ENCODE measurements at regions of chr15 and their contacts with region 1.

Region 1: DNA sequence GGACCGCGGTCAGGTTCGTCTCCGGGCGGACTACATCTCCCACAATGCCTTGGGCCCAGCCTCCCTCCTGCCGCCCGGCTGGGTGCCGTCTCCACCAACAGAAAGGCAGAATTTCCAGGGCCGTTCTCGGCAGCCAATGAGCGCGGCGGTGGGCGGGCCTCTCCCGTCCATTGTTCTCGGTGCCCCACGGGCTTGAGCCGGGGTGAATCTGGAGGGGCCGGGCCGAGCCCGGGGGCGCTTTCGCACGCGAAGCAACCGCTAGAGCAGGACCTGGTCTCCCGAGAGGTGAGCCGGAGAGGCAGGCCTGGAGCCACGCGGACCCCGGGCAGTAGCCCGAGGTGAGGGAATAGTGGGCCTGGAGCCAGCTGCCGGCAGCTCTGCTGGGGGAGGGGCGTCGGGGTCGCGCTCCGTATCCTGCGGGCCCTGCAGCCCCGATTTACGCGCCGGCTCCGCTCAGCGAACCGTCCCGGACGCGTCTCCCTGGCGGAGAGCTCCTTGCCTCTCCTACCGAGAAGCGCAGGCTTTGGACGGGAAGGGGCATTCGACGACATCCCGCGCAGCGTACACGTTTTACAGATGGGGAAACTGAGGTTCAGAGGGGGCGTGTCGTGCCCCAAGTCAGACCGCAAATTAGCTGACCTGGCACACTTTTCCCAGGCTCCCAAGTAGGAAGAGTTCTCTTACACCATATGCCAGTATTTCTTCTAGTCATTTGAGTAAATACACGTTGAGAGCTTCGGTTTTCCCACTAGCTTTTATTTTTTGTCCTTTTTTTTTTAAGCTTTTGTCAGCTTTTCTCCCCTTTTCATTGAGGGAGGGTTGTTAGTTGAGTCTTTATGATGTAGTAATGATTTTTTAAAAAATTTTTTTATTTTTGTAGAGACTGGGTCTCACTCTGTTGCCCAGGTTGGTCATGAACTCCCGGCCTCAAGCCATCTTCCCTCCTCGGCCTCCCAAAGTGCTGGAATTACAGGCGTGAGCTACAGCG is at the start of gene ZSCAN2:
- DNase-seq: peak; percentile 96
- CTCF ChIP-seq: no peak

Region 2: DNA sequence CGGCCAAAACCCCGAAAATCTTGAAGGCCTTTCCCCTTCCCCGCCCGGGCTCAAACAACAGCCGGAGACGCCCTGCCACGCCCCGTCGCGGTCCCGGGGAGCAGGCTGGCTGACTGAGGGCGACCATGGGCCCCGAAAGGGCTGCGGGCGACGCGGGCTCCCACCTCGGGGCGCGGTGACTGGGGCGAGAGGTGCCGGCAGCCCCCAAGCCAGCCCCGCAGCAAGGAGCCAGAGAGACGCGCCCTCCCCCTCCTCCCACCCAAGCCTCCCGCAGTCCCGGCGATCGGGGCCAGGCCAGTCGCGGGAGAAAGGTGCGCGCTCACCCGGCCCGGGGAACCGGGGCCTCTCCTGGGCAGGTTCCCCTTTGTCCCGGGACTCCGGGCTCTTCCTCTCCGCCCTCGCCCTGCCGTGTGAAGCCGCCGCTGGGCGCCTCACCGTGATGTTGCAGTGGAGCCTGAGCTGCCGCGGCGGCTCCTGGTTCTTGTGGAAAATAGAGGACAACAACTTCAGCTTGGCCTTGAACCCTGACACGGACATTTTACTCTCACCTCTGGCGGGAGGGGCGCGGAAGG is 30.9 kb before region 1 on chr15:
- CTCF ChIA-PET with region 1: interaction called, 12 read pairs
- POLR2A ChIA-PET with region 1: no interaction called
- DNase-seq: peak; percentile 46
- CTCF ChIP-seq: no peak

Region 3: GRCh38 chr15:84653910-84654704 is 53.0 kb after region 1 on chr15 and contains the start of gene WDR73:
- CTCF ChIA-PET with region 1: interaction called, 14 read pairs
- POLR2A ChIA-PET with region 1: no interaction called
- DNase-seq: peak; percentile 96
- CTCF ChIP-seq: no peak

Region 4: GRCh38 chr15:84741121-84741520 is 140.0 kb after region 1 on chr15:
- CTCF ChIA-PET with region 1: no interaction called
- POLR2A ChIA-PET with region 1: no interaction called
- DNase-seq: no peak
- CTCF ChIP-seq: no peak

Region 5: GRCh38 chr15:84840741-84841429 is 239.7 kb after region 1 on chr15:
- CTCF ChIA-PET with region 1: no interaction called
- POLR2A ChIA-PET with region 1: no interaction called
- DNase-seq: no peak
- CTCF ChIP-seq: no peak

Region 6: DNA sequence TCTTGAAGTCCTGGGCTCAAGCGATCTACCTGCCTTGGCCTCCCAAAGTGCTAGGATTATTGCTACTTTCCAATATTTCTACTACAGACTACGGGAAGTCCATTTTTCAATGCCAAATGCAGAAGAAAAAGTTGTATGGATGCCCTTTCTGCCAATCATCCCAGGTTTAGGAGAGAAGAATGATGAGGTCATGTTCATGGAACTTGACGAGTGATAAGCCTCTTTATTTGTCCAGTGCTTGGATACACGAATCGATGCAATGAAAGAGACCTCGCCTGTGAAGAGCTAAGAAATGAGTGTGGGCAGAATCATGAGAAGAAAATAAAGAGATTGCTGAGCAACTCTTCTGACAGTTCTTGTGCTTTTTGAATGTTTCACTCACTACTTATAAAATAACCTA is 282.3 kb after region 1 on chr15:
- CTCF ChIA-PET with region 1: interaction called, 10 read pairs
- POLR2A ChIA-PET with region 1: no interaction called
- DNase-seq: no peak
- CTCF ChIP-seq: no peak

Measured in GM10248 (cell line).